ENCODE measurements at regions of chr2 and their contacts with region 1.

Region 1: DNA sequence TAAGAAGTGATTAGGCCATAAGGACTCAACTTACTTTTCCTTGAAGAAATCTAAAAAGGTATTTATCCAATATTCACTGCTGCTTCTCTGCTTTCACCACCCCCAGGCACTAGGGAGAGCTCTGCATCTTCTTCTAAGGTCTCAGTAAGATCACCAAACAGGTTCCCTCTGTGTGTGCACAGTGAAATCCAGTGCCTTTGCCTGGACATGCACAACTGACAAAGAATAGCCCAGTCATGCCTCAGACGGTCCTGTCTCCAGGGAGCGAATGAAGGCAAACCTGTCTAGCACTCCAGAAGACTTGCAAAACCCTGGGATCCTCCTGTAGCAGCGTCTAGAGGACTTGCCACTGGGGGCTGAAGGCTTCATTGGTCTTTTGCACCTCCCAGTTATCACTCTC is 344.5 kb upstream of the LRATD1 start:
- DNase-seq: peak; percentile 98
- H3K4me3 ChIP-seq: no peak overlapping the region
- H3K27ac ChIP-seq: peak overlapping the region; percentile 42
- H3K4me1 ChIP-seq: peaks cover 16% of the 10 kb centered on the region
- H3K27me3 ChIP-seq: no peaks in the 10 kb centered on the region
- CTCF ChIP-seq: peak; percentile 73 to 75

Region 2: GRCh38 chr2:14256890-14257289 is 31.1 kb before region 1 on chr2:
- CTCF ChIA-PET with region 1: no interaction called
- dilution Hi-C with region 1: no loop called
- in situ Hi-C with region 1: no loop called
- intact Hi-C with region 1: no loop called
- DNase-seq: peak; percentile 59
- H3K4me3 ChIP-seq: no peak overlapping the region
- H3K27ac ChIP-seq: peak overlapping the region; percentile 38
- H3K4me1 ChIP-seq: peaks cover 16% of the 10 kb centered on the region
- H3K27me3 ChIP-seq: no peaks in the 10 kb centered on the region
- CTCF ChIP-seq: no peak

Region 3: GRCh38 chr2:14451312-14451711 is 163.3 kb after region 1 on chr2:
- CTCF ChIA-PET with region 1: no interaction called
- dilution Hi-C with region 1: no loop called
- in situ Hi-C with region 1: no loop called
- intact Hi-C with region 1: loop called (anchors 1 kb)
- DNase-seq: no peak
- H3K4me3 ChIP-seq: no peak overlapping the region
- H3K27ac ChIP-seq: no peak overlapping the region
- H3K4me1 ChIP-seq: no peaks in the 10 kb centered on the region
- H3K27me3 ChIP-seq: no peaks in the 10 kb centered on the region
- CTCF ChIP-seq: peak; percentile 13 to 43

Region 4: GRCh38 chr2:14516844-14517243 is 228.8 kb after region 1 on chr2:
- CTCF ChIA-PET with region 1: no interaction called
- dilution Hi-C with region 1: no loop called
- in situ Hi-C with region 1: no loop called
- intact Hi-C with region 1: no loop called
- DNase-seq: peak; percentile 89
- H3K4me3 ChIP-seq: no peak overlapping the region
- H3K27ac ChIP-seq: peak overlapping the region; percentile 30
- H3K4me1 ChIP-seq: peaks cover 19% of the 10 kb centered on the region
- H3K27me3 ChIP-seq: no peaks in the 10 kb centered on the region
- CTCF ChIP-seq: no peak

Region 5: DNA sequence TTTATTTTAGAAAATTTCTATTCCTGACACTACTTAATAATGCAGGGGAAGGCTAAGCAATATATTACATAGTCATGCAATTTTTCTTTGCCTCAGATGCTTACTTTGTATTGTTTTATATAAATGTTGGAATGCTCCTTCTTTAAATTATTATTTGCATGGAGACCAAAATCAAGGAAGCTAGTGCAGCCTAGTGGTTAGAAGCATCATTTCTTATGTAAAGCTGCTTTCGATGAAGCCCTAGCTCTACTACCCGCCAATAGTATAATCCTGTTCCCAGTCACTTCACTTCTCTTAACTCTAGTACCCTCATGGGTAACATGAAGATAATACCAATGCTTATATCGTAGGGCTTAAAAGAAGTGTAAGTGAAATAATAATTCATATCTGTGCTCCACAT is 543.4 kb after region 1 on chr2:
- CTCF ChIA-PET with region 1: no interaction called
- dilution Hi-C with region 1: no loop called
- in situ Hi-C with region 1: no loop called
- intact Hi-C with region 1: loop called (anchors 2 kb)
- DNase-seq: peak; percentile 11
- H3K4me3 ChIP-seq: no peak overlapping the region
- H3K27ac ChIP-seq: no peak overlapping the region
- H3K4me1 ChIP-seq: peaks cover 4% of the 10 kb centered on the region
- H3K27me3 ChIP-seq: no peaks in the 10 kb centered on the region
- CTCF ChIP-seq: peak; percentile 16 to 47

Region 6: DNA sequence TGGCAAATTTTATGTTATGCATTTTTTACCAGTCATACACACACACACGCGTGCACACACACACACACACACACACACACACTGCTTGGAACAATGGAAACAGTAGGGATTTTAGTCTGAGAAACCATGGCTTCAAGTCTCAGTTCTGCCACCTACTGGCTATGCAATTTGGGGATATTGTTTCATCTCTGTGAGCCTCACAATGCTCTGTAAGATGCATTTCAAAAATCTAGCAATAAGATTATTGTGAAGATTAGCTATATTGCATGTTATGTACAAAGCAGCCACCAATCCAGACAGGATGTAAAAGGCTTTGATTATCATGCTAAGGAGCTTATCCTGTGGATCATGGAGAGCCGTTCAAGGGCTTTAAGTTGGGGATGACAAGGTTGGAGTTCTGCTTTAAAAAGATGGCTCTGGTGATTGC is 871.7 kb after region 1 on chr2:
- CTCF ChIA-PET with region 1: no interaction called
- dilution Hi-C with region 1: no loop called
- in situ Hi-C with region 1: no loop called
- intact Hi-C with region 1: loop called (anchors 10 kb)
- DNase-seq: peak; percentile 47
- H3K4me3 ChIP-seq: no peak overlapping the region
- H3K27ac ChIP-seq: no peak overlapping the region
- H3K4me1 ChIP-seq: peaks cover 4% of the 10 kb centered on the region
- H3K27me3 ChIP-seq: no peaks in the 10 kb centered on the region
- CTCF ChIP-seq: peak; percentile 69

Measured in mammary epithelial cell (primary cell).